Dorsolateral prefrontal cortex (tissue), 120 donors: ENCODE measurements at regions of chr12 and their contacts with region 1.

Region 1: GRCh38 chr12:104137913-104138796 is at the start of gene NFYB:
- DNase-seq: peak; percentile 82 to 96 (median 94)
- H3K4me3 ChIP-seq: peak within 1 kb of the TSS; percentile 63 to 92 (median 82)
- H3K27ac ChIP-seq: peak within 1 kb of the TSS; percentile 18 to 97 (median 91)
- H3K27me3 ChIP-seq: no peaks in the 10 kb centered on the region
- CTCF ChIP-seq: peak in 6 of 56 donors; percentile 5 to 18 (median 10)
- total RNA-seq, gene NFYB: 23.1 to 43.8 (median 30.8) TPM

Region 2: DNA sequence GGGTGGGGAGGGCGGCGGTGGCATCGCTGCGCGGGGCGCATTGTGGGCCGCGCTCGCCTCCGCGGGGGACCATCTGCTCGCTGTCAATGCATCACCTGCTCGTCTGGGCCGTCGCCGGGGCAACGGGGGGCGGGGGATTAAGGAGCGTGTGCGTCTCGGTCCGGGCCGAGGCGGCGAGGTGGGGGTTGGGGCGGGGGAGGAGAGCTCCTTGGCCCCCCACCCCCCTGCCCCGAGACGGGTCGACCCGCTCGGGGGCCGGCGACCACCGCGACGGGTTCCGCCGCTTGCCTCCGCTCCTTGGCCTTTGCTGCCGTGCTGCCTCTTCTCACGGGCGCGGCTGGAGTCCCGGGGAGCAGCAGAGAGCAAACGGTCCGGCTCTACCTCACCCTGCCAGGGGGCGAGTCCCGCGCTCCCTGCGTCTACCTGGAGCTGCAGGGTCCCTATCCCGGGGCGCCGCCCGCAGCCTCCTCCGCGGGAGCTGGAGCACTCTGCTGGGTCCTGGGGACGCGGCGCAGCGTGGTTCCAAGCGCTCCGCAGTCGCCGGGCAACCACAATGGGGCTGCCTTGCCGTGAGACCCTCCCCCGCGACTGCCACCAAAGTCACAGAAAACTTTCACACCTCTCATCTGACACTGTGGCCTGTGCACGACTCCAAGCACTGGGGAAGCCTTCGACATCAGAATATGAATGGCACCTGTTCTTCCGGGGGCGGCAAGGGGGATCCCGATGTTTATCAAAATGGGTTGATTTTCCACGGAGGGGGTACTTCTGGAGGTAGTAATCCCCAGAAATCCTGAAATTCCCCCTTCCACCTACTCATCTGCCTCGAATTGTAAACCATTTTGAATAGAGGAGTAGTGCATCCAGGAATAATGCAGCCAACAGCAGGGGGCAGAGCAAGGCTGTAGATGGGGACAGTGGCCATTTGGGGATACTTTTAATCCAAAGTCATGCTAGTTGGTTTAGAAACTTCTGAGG is 642.4 kb before region 1 on chr12 and contains the start of gene C12orf42:
- intact Hi-C with region 1: no loop called
- DNase-seq: peak in 8 of 10 donors; percentile 14 to 69 (median 57)
- H3K4me3 ChIP-seq: peak within 1 kb of the TSS; percentile 29 to 77 (median 59)
- H3K27ac ChIP-seq: peak within 1 kb of the TSS in 18 of 59 donors; percentile 13 to 57 (median 36)
- H3K27me3 ChIP-seq: peaks cover 0 to 15% (median 0%) of the 10 kb centered on the region in 45 donors
- CTCF ChIP-seq: peak in 55 of 56 donors; percentile 16 to 70 (median 56)
- total RNA-seq, gene C12orf42: 0.34 to 4.4 (median 1.1) TPM in 99 of 120 experiments, not detected in the others

Region 3: GRCh38 chr12:103908866-103909265 is 229.3 kb before region 1 on chr12:
- intact Hi-C with region 1: no loop called
- DNase-seq: no peak
- H3K4me3 ChIP-seq: no peak overlapping the region
- H3K27ac ChIP-seq: no peak overlapping the region
- H3K27me3 ChIP-seq: no peaks in the 10 kb centered on the region
- CTCF ChIP-seq: no peak

Region 4: DNA sequence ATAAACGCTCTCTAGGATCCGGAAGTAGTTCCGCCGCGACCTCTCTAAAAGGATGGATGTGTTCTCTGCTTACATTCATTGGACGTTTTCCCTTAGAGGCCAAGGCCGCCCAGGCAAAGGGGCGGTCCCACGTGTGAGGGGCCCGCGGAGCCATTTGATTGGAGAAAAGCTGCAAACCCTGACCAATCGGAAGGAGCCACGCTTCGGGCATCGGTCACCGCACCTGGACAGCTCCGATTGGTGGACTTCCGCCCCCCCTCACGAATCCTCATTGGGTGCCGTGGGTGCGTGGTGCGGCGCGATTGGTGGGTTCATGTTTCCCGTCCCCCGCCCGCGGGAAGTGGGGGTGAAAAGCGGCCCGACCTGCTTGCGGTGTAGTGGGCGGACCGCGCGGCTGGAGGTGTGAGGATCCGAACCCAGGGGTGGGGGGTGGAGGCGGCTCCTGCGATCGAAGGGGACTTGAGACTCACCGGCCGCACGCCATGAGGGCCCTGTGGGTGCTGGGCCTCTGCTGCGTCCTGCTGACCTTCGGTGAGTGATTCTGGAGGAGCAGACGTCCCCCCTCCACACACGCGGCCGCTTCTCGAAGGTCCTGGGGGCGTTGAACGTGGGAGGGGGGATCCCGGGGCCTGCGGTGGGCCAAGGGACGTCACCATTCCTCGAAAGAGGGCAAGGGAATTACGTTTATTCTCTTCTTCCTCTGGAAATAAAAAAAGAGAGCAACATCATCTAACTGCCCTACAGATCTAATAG is 207.9 kb before region 1 on chr12 and contains the start of gene HSP90B1:
- intact Hi-C with region 1: loop called in 1 of 2 experiments (anchors 10 kb)
- DNase-seq: peak; percentile 95 to 100 (median 99)
- H3K4me3 ChIP-seq: peak within 1 kb of the TSS; percentile 73 to 100 (median 94)
- H3K27ac ChIP-seq: peak within 1 kb of the TSS; percentile 74 to 98 (median 95)
- H3K27me3 ChIP-seq: no peaks in the 10 kb centered on the region
- CTCF ChIP-seq: peak in 2 of 56 donors; percentile 2 to 23
- total RNA-seq, gene HSP90B1: 164 to 489 (median 276) TPM

Region 5: GRCh38 chr12:103956516-103957027 is 181.6 kb before region 1 on chr12:
- intact Hi-C with region 1: no loop called
- DNase-seq: peak in 3 of 10 donors; percentile 23 to 60 (median 37)
- H3K4me3 ChIP-seq: peak overlapping the region; percentile 67 to 100 (median 91)
- H3K27ac ChIP-seq: peak overlapping the region; percentile 12 to 99 (median 94)
- H3K27me3 ChIP-seq: no peaks in the 10 kb centered on the region
- CTCF ChIP-seq: no peak

Region 6: DNA sequence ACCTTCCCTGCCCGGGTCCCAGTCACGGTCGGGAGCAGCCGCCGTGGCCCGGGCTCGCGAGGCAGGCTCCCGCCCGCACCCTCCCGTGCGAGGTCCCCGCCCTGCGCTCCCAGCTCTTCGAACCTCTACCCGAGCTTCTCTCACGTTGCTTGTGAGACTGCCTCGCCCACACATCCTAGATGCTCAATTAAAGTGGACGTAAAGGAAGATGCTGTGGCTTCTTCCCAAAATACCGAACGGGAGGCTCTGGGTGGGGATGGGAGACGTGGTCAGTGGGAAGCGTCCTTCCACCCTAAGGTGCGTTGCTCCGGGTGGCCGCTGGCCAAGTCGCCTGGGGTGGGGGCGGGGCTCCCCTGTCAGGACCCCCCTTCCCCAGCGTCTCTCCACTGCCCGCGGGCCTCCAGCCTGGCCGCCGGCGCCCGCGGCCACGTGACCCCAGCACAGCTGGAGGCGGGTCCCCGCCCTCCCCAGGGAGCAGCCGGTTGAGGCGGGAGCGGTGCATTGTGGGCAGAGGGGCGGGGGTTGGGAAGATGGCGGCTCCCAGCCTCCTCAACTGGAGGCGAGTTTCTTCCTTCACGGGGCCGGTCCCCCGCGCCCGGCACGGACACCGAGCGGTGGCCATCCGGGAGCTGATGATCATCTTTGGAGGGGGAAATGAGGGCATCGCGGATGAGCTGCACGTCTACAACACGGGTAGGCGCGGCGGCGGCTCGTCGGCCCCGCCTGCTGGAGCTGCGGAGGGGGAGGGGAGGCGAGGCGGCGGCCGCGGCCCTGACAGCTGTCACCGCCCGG is 73.9 kb before region 1 on chr12 and contains the start of gene HCFC2:
- intact Hi-C with region 1: loop called (anchors 2 kb)
- DNase-seq: peak; percentile 61 to 95 (median 90)
- H3K4me3 ChIP-seq: peak within 1 kb of the TSS; percentile 64 to 99 (median 90)
- H3K27ac ChIP-seq: peak within 1 kb of the TSS; percentile 41 to 95 (median 88)
- H3K27me3 ChIP-seq: no peaks in the 10 kb centered on the region
- CTCF ChIP-seq: peak in 23 of 56 donors; percentile 5 to 53 (median 26)
- total RNA-seq, gene HCFC2: 20.2 to 33.3 (median 27.6) TPM

Region 7: GRCh38 chr12:104303538-104304151 is 165.5 kb after region 1 on chr12 and contains the start of gene EID3:
- intact Hi-C with region 1: loop called in 1 of 2 experiments (anchors 5 kb)
- DNase-seq: peak; percentile 82 to 95 (median 86)
- H3K4me3 ChIP-seq: peak within 1 kb of the TSS; percentile 42 to 79 (median 66)
- H3K27ac ChIP-seq: peak within 1 kb of the TSS in 53 of 59 donors; percentile 3 to 86 (median 54)
- H3K27me3 ChIP-seq: no peaks in the 10 kb centered on the region
- CTCF ChIP-seq: peak in 26 of 56 donors; percentile 5 to 59 (median 29)
- total RNA-seq, gene EID3: 2.7 to 9.5 (median 5.7) TPM

Region 8: GRCh38 chr12:105235732-105236476 is 1097.7 kb after region 1 on chr12 and contains the start of gene APPL2:
- intact Hi-C with region 1: loop called in 1 of 2 experiments (anchors 5 kb)
- DNase-seq: peak; percentile 77 to 93 (median 89)
- H3K4me3 ChIP-seq: peak within 1 kb of the TSS; percentile 45 to 96 (median 88)
- H3K27ac ChIP-seq: peak within 1 kb of the TSS; percentile 58 to 99 (median 95)
- H3K27me3 ChIP-seq: no peaks in the 10 kb centered on the region
- CTCF ChIP-seq: peak in 44 of 56 donors; percentile 12 to 61 (median 30)
- total RNA-seq, gene APPL2: 39.6 to 97.0 (median 66.6) TPM